ENCODE measurements at regions of chr13 and their contacts with region 1.

Region 1: GRCh38 chr13:113275387-113275786 is 21.7 kb upstream of the LAMP1 start:
- DNase-seq: peak; percentile 84
- ATAC-seq: peak; percentile 93
- H3K4me3 ChIP-seq: no peak overlapping the region
- H3K27ac ChIP-seq: no peak overlapping the region
- H3K4me1 ChIP-seq: peaks cover 18% of the 10 kb centered on the region
- H3K27me3 ChIP-seq: no peaks in the 10 kb centered on the region
- CTCF ChIP-seq: peak; percentile 68
- EP300 ChIP-seq: 0 out of 4 replicates have a peak, but pooled peaks of 1 of the 2 experiments have one; percentile 28
- POLR2A ChIP-seq: no peak
- RAD21 ChIP-seq: peak; percentile 72

Region 2: DNA sequence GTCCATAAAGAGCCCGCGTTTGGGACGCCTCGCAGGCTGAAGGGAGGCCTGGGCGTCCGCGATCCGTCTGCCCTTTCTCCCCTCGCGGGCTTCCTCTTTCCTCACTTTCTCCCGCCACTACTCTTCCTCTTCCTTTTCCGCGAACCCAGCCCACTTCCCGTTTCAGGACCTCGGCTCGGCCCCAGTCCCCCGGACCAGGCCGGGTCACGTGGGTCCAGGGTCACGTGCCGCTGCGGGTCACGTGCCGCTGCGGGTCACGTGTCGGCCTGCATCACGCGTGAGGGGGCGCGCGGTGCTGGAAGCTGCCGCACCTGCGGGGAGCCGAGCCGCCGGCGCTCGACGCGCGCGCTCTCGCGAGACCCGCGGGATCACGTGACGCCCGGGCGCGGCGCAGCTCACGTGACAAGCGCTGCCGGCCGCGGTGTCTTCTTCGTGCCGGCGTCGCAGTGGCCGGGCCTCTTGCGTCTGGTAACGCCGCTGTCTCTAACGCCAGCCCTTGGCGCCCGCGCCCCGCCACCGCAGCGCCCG is 21.5 kb after region 1 on chr13 and contains the start of gene LAMP1:
- CTCF ChIA-PET with region 1: interaction called, 3 read pairs
- POLR2A ChIA-PET with region 1: no interaction called
- in situ Hi-C with region 1: no loop called
- intact Hi-C with region 1: loop called (anchors 2 kb)
- DNase-seq: peak; percentile 89
- ATAC-seq: peak; percentile 58
- H3K4me3 ChIP-seq: peak within 1 kb of the TSS; percentile 82 to 90 (median 89)
- H3K27ac ChIP-seq: peak within 1 kb of the TSS; percentile 71
- H3K4me1 ChIP-seq: peaks cover 46% of the 10 kb centered on the region
- H3K27me3 ChIP-seq: no peaks in the 10 kb centered on the region; a peak in 1 of 5 replicates
- CTCF ChIP-seq: peak; percentile 42; the same call in 1 of the 2 replicates
- EP300 ChIP-seq: peak; percentile 78; a peak in 3 of 4 replicates
- POLR2A ChIP-seq: peak; percentile 62 to 63
- RAD21 ChIP-seq: peak; percentile 79
- total RNA-seq, gene LAMP1: 33.2 and 112 TPM in 2 replicates

Region 3: DNA sequence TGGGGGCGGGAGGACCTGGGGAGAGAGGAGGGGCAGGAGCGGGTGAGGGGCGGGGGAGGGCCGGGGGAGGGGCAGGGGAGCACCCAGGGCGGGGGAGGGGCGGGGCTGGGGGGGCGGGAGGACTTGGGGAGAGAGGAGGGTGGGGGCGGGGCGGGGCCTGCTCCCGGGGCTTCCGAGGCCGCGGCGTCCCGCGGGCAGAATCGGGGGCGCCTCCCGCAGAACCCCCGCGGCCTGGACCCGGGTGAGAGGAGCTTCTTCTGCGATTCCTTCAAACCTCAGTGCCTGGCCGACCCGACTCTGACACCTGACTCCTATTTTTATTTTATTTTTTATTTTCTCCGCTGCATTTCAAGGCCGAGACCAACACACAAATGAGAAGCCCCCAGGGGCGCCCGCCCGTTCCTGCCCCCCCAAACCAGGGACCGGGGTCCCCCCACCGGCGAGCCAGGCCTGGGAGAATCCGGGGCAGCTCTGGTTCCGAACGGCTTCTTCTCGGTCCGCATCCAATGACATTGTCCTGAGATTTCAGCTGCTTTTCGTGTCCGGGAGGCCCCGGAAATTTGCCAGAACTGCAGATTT is 89.0 kb after region 1 on chr13:
- CTCF ChIA-PET with region 1: no interaction called
- POLR2A ChIA-PET with region 1: no interaction called
- in situ Hi-C with region 1: no loop called
- intact Hi-C with region 1: no loop called
- DNase-seq: no peak
- ATAC-seq: no peak
- H3K4me3 ChIP-seq: peak overlapping the region; percentile 36 to 61 (median 54); a peak in 4 of 6 replicates
- H3K27ac ChIP-seq: peak overlapping the region; percentile 46
- H3K4me1 ChIP-seq: peaks cover 52% of the 10 kb centered on the region
- H3K27me3 ChIP-seq: peaks cover 6 to 22% of the 10 kb centered on the region in 2 experiments; a peak in 4 of 5 replicates
- CTCF ChIP-seq: no peak
- EP300 ChIP-seq: no peak
- POLR2A ChIP-seq: 0 out of 4 replicates have a peak, but pooled peaks of 1 of the 2 experiments have one; percentile 37
- RAD21 ChIP-seq: no peak

Region 4: GRCh38 chr13:113374511-113375175 is 99.3 kb after region 1 on chr13:
- CTCF ChIA-PET with region 1: interaction called, 11 read pairs
- POLR2A ChIA-PET with region 1: no interaction called
- in situ Hi-C with region 1: no loop called
- intact Hi-C with region 1: loop called (anchors 1 kb)
- DNase-seq: no peak
- ATAC-seq: no peak
- H3K4me3 ChIP-seq: no peak overlapping the region
- H3K27ac ChIP-seq: no peak overlapping the region
- H3K4me1 ChIP-seq: peaks cover 24% of the 10 kb centered on the region
- H3K27me3 ChIP-seq: peaks cover 4 to 41% of the 10 kb centered on the region in 2 experiments
- CTCF ChIP-seq: no peak
- EP300 ChIP-seq: no peak
- POLR2A ChIP-seq: no peak
- RAD21 ChIP-seq: no peak

Region 5: DNA sequence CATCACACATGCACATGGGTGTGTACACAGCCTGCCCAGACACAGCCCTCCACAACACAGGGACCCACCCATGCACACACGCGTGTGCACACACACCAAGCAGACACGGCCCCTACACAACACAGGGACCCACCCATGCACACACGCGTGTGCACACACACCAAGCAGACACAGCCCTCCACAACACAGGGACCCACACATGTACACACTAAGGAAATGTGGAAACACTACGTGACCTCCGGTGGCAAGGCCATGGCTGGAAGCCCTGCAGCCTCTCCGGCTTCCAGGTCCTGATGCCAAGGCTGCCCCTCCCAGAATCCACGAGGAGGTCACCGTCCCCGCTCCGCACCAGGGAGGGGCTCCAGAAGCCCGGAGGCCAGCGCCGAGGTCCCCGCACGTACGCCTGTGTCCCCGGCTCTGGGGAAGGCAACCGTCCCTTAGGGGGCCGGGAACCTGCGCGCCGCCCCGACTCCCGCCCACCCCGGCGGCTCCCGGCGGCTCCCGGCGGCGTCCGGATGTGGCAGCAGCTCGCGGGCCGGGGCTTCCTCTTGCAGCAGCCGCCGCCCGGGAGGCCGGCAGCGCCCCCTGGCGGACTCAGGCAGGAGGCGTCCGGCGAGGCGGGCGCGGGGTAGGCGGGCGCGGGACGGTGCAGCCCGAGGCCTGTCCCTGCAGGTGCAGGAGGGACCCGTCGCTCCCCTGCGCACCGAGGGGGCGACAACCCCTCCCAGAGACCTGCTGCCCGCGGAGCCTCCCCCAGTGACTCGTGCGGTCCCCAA is 118.4 kb after region 1 on chr13:
- CTCF ChIA-PET with region 1: interaction called, 5 read pairs
- POLR2A ChIA-PET with region 1: no interaction called
- in situ Hi-C with region 1: no loop called
- intact Hi-C with region 1: loop called (anchors 1 kb)
- DNase-seq: peak; percentile 62
- ATAC-seq: peak; percentile 94
- H3K4me3 ChIP-seq: peak overlapping the region; percentile 72 to 87 (median 84)
- H3K27ac ChIP-seq: peak overlapping the region; percentile 8
- H3K4me1 ChIP-seq: peaks cover 50% of the 10 kb centered on the region
- H3K27me3 ChIP-seq: peaks cover 2 to 9% of the 10 kb centered on the region in 2 experiments; a peak in 1 of 5 replicates
- CTCF ChIP-seq: peak; percentile 81
- EP300 ChIP-seq: no peak
- POLR2A ChIP-seq: peak in 1 of 2 experiments; percentile 50; a peak in 1 of 4 replicates
- RAD21 ChIP-seq: peak; percentile 97